AG04450 (cell line): ENCODE measurements at regions of chr12 and their contacts with region 1.

Region 1: DNA sequence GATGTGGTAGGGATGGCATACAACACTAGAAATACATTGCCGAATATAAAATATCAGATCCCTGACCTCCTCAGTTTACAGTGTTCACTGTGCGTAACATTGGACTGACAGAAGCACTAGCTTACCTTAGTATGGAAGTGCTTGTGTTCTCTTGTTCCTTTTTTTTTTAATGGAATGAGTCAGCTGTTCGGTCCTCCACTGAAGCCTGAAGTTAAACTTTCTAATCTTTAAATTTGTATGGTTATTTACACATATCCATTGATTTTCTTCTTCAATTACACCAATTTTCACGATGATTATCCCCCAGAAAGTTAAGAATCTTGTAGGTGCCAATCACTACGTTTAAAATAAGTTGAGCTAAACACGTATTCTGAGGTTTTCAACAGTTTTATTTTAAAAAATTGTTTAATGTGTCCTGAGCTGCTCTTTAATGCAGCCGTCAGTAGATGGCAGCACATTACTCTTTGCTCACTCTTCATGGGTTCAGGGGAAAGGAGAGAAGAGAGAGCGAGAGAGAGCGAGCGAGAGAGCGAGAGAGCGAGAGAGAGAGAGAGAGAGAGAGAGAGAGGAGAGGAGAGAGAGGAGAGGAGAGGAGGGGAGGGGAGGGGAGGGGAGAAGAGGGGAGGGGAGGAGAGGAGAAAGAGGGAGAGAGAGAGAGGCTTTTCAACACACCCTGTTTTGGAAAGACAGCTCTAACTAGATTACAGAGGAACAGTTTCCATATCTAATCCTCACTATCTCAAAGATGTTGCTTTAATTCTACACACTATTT is 134.7 kb upstream of the SCAF11 start:
- DNase-seq: peak; percentile 58
- H3K4me3 ChIP-seq: no peak overlapping the region
- H3K27ac ChIP-seq: no peak overlapping the region
- H3K27me3 ChIP-seq: no peaks in the 10 kb centered on the region
- CTCF ChIP-seq: peak; percentile 76

Region 2: GRCh38 chr12:45762185-45763110 is 362.6 kb before region 1 on chr12:
- CTCF ChIA-PET with region 1: interaction called, 15 read pairs
- POLR2A ChIA-PET with region 1: no interaction called
- DNase-seq: peak; percentile 27
- H3K4me3 ChIP-seq: no peak overlapping the region
- H3K27ac ChIP-seq: no peak overlapping the region
- H3K27me3 ChIP-seq: no peaks in the 10 kb centered on the region
- CTCF ChIP-seq: peak; percentile 86

Region 3: GRCh38 chr12:46153268-46153872 is 28.3 kb after region 1 on chr12:
- CTCF ChIA-PET with region 1: interaction called, 17 read pairs
- POLR2A ChIA-PET with region 1: no interaction called
- DNase-seq: no peak
- H3K4me3 ChIP-seq: no peak overlapping the region
- H3K27ac ChIP-seq: no peak overlapping the region
- H3K27me3 ChIP-seq: no peaks in the 10 kb centered on the region
- CTCF ChIP-seq: peak; percentile 77

Region 4: GRCh38 chr12:46364777-46365580 is 239.9 kb after region 1 on chr12:
- CTCF ChIA-PET with region 1: interaction called, 10 read pairs
- POLR2A ChIA-PET with region 1: interaction called, 3 read pairs
- DNase-seq: no peak
- H3K4me3 ChIP-seq: peak overlapping the region; percentile 95
- H3K27ac ChIP-seq: no peak overlapping the region
- H3K27me3 ChIP-seq: no peaks in the 10 kb centered on the region
- CTCF ChIP-seq: no peak

Region 5: GRCh38 chr12:46983393-46984266 is 858.6 kb after region 1 on chr12:
- CTCF ChIA-PET with region 1: interaction called, 17 read pairs
- POLR2A ChIA-PET with region 1: no interaction called
- DNase-seq: peak; percentile 29
- H3K4me3 ChIP-seq: no peak overlapping the region
- H3K27ac ChIP-seq: no peak overlapping the region
- H3K27me3 ChIP-seq: no peaks in the 10 kb centered on the region
- CTCF ChIP-seq: peak; percentile 94